CD4-positive, alpha-beta memory T cell (primary cell): ENCODE measurements at regions of chr1 and their contacts with region 1.

Region 1: DNA sequence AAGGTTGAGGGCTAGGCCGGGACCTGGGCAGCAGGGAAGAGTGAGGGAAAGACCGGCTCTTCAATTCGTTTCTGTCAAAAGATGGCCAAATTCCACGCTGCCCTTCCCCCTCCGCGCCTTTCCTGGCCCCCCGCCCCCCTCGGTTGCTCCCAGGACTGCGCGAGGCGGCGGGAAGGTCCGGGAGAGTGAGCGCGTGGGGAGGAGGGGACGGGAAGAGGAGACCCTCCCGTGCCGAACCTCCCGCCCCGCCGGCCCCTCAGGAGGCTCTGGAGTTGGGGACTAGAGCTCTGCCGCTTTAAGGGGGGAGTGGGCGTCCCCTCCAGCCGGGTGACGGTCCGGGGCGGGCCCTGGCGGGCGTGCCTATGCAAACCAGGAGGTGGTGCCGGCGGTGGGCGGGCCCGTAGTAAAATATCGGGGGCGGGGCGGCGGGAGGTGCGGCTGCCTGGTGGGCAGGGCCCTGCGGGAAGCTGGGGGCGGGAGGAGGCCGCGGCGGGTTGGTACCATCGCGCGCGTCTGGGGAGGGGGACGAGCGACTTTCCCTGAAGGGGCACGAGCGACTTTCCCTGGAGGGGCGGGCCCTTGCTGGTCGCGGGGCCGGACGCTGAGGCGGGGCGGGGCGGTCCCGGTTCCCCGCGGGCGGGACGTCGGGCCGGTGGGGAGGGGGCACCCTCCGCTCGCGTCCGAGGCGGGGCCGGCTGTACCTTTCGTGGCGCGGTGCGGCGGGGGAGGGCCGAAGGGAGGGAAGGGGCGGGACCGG is 58.2 kb downstream of the BCL9 start:
- DNase-seq: peak; percentile 94 to 96 (median 95)
- H3K4me3 ChIP-seq: peak overlapping the region; percentile 67 to 72
- H3K4me3 Mint-ChIP-seq: peak overlapping the region; percentile 86 to 92 (median 90)
- H3K27ac ChIP-seq: peak overlapping the region; percentile 47
- H3K27ac Mint-ChIP-seq: peak overlapping the region; percentile 48 to 91 (median 85)
- H3K4me1 ChIP-seq: peaks cover 24% of the 10 kb centered on the region
- H3K4me1 Mint-ChIP-seq: peaks cover 15 to 33% (median 25%) of the 10 kb centered on the region in 4 donors
- H3K27me3 ChIP-seq: no peaks in the 10 kb centered on the region
- H3K27me3 Mint-ChIP-seq: no peaks in the 10 kb centered on the region

Region 2: DNA sequence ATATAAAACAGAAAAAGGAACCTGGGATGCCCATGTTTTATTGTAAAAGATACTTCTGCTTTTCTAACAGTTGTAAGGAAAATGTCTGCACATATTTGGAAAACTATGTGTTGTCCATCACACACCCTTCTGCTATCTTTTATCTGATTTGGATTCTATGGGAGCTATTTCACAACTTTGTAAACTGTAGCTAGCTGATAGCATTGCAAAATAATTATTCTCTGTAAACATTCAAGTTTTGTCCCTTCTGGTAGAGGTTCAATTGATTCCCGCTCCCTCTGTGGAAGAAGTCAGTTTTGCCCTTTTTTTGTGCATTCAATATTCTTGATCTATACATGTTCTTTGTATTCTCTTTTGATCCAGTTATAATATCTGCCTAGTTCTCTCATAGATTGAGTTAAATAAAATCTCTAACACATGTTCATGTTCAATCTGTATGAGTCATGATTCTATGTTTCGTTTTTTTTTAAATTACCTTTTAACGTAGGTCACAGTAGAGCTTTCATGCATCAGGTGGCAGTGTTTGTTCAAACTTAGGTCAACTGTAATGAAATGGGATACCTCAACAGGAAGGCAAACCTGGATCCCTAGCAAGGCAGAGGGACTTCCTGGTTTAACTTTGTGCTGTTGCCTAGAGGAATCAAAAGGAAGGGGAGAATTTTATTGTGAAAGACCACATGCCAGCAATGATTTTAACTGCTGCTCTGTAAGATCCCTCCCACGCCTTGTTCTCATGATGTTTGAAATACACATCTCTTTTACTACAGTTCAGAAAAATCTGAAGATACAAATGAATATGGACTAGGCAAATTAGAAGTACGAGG is 84.3 kb before region 1 on chr1:
- CTCF ChIA-PET with region 1: interaction called, 3 read pairs
- POLR2A ChIA-PET with region 1: interaction called, 4 read pairs
- intact Hi-C with region 1: loop called (anchors 2 kb)
- DNase-seq: peak in 4 of 5 donors; percentile 9 to 29 (median 24)
- H3K4me3 ChIP-seq: no peak overlapping the region
- H3K4me3 Mint-ChIP-seq: no peak overlapping the region
- H3K27ac ChIP-seq: no peak overlapping the region
- H3K27ac Mint-ChIP-seq: peak overlapping the region in 2 of 7 donors; percentile 39 to 51
- H3K4me1 ChIP-seq: no peaks in the 10 kb centered on the region
- H3K4me1 Mint-ChIP-seq: peaks cover 5 to 7% (median 6%) of the 10 kb centered on the region in 4 donors
- H3K27me3 ChIP-seq: no peaks in the 10 kb centered on the region
- H3K27me3 Mint-ChIP-seq: peaks cover 0 to 9% of the 10 kb centered on the region in 2 donors

Region 3: GRCh38 chr1:147579934-147580537 is 19.5 kb before region 1 on chr1:
- CTCF ChIA-PET with region 1: no interaction called
- POLR2A ChIA-PET with region 1: interaction called, 6 read pairs
- intact Hi-C with region 1: loop called (anchors 1 kb)
- DNase-seq: peak; percentile 37 to 53 (median 40)
- H3K4me3 ChIP-seq: no peak overlapping the region
- H3K4me3 Mint-ChIP-seq: peak overlapping the region in 7 of 8 donors; percentile 4 to 86 (median 61)
- H3K27ac ChIP-seq: no peak overlapping the region
- H3K27ac Mint-ChIP-seq: peak overlapping the region in 4 of 7 donors; percentile 1 to 66 (median 49)
- H3K4me1 ChIP-seq: peaks cover 23% of the 10 kb centered on the region
- H3K4me1 Mint-ChIP-seq: peaks cover 16 to 26% (median 21%) of the 10 kb centered on the region in 4 donors
- H3K27me3 ChIP-seq: peaks cover 11% of the 10 kb centered on the region
- H3K27me3 Mint-ChIP-seq: peaks cover 30 to 32% of the 10 kb centered on the region in 2 donors

Region 4: GRCh38 chr1:147634645-147635044 is 35.1 kb after region 1 on chr1:
- CTCF ChIA-PET with region 1: no interaction called
- POLR2A ChIA-PET with region 1: no interaction called
- intact Hi-C with region 1: no loop called
- DNase-seq: no peak
- H3K4me3 ChIP-seq: no peak overlapping the region
- H3K4me3 Mint-ChIP-seq: no peak overlapping the region
- H3K27ac ChIP-seq: no peak overlapping the region
- H3K27ac Mint-ChIP-seq: no peak overlapping the region
- H3K4me1 ChIP-seq: peaks cover 6% of the 10 kb centered on the region
- H3K4me1 Mint-ChIP-seq: peaks cover 9 to 34% (median 20%) of the 10 kb centered on the region in 4 donors
- H3K27me3 ChIP-seq: no peaks in the 10 kb centered on the region
- H3K27me3 Mint-ChIP-seq: no peaks in the 10 kb centered on the region